OCI-LY7 (cell line): ENCODE measurements at regions of chr9 and their contacts with region 1.

Region 1: DNA sequence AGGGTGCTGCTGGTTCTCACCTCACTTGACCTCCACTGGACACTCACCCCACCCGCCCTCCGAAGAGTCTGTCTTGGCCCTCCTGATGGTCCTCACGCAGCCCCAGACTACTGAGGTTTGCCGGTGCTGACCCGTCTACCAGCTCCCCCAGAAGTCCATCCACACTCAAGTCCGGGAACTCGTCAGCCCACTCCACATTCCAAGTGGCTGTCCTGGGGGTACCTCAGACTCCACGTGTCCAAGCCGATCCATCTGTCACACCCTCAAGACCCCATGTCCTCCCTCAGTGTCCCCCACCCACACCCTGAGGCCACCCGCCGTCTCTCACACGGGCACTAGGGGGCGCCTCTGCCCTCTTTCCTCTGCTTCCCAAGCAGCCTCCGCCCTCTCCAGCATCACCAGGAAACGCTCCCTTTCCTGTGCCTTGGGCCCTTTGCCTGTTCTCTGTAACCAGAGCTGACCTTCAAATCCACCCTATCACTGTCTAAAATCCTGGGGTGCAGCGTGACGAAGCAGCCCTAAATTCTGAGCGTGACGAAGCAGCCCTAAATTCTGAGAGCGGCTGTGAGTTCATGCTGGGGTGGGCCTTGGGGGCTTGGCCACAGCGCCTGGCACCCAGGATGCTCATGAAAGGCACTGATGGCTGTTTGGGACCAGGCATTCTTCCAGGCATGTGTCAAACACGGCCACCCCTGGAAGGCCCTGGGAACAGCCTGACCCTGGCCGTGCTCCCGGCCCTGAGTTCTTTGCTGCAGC is 95.7 kb downstream of the KCNT1 start:
- DNase-seq: peak; percentile 33
- H3K4me3 ChIP-seq: no peak overlapping the region
- H3K27ac ChIP-seq: no peak overlapping the region
- H3K4me1 ChIP-seq: no peaks in the 10 kb centered on the region
- CTCF ChIP-seq: peak; percentile 86

Region 2: GRCh38 chr9:135848341-135849047 is 50.8 kb after region 1 on chr9:
- CTCF ChIA-PET with region 1: no interaction called
- POLR2A ChIA-PET with region 1: no interaction called
- intact Hi-C with region 1: no loop called
- DNase-seq: peak; percentile 41
- H3K4me3 ChIP-seq: peak overlapping the region; percentile 31
- H3K27ac ChIP-seq: peak overlapping the region; percentile 81
- H3K4me1 ChIP-seq: peaks cover 23% of the 10 kb centered on the region
- CTCF ChIP-seq: no peak

Region 3: GRCh38 chr9:135925496-135926133 is 127.9 kb after region 1 on chr9:
- CTCF ChIA-PET with region 1: no interaction called
- POLR2A ChIA-PET with region 1: no interaction called
- intact Hi-C with region 1: loop called (anchors 1 kb)
- DNase-seq: no peak
- H3K4me3 ChIP-seq: no peak overlapping the region
- H3K27ac ChIP-seq: no peak overlapping the region
- H3K4me1 ChIP-seq: no peaks in the 10 kb centered on the region
- CTCF ChIP-seq: no peak